ENCODE measurements at regions of chr3 and their contacts with region 1.

Region 1: DNA sequence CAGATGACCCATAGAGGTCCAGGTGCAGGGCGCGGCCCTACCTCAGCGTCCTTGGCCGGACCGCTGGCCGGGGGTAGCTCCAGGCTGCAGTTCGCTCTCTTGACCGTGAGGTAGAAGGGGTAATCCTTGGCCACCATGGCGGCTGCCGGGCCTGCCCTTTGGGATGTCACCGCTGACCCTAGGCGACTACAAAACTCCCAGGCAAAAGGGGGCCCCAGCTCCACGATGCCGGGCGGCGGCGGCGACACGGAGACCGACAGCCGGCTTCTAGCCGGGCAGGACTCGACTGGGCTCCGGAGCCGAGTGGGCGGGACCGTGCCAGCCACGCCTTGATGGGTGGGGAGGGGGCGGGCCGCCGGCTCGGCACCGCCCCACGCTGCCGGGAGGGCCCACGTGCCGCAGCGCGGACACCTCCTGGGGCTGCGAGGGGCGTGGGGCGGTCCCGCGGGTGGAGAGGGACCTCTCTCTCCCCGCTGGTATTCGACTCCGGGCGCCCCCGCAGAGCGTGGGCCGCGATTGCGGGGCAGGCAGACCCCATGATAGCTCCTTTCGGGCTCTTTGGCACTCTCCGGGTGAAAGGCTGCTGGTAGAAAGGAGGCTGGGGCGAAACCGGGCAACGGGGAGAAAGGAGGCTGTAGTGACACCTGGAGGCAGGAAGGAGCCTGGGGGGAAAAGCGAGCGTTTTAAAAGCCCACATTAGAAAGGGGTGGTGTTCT is at the start of gene ARHGEF3:
- DNase-seq: peak; percentile 98
- H3K4me3 ChIP-seq: peak within 1 kb of the TSS; percentile 66 to 98 (median 76)
- H3K27ac ChIP-seq: peak within 1 kb of the TSS; percentile 64 to 91 (median 82)
- H3K4me1 ChIP-seq: peaks cover 28 to 58% (median 50%) of the 10 kb centered on the region in 6 donors
- H3K27me3 ChIP-seq: no peaks in the 10 kb centered on the region
- CTCF ChIP-seq: peak in 10 of 11 experiments; percentile 9 to 76 (median 60)
- POLR2A ChIP-seq: peak; percentile 65 to 92 (median 77)
- total RNA-seq, gene ARHGEF3: 29.6 to 35.1 (median 33.4) TPM

Region 2: DNA sequence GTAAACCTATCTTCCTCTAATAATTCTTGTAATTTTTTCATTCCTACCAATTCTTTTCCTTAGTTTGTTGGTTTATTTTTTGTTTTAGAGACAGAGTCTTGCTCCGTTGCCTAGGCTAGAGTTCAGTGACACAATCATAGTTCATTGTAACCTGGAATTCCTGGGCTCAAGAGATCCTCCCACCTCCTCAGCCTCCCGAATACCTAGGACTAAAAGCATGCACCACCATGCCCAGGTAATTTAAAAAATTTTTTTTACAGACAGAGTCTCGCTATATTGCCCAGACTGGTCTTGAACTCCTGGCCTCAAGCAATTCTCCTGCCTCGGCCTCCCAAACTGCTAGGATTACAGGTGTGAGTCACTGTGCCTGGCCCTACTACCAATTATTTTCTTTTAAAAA is 553.8 kb before region 1 on chr3:
- intact Hi-C with region 1: no loop called
- DNase-seq: no peak
- H3K4me3 ChIP-seq: no peak overlapping the region
- H3K27ac ChIP-seq: no peak overlapping the region
- H3K4me1 ChIP-seq: no peaks in the 10 kb centered on the region
- H3K27me3 ChIP-seq: no peaks in the 10 kb centered on the region
- CTCF ChIP-seq: no peak
- POLR2A ChIP-seq: no peak

Region 3: DNA sequence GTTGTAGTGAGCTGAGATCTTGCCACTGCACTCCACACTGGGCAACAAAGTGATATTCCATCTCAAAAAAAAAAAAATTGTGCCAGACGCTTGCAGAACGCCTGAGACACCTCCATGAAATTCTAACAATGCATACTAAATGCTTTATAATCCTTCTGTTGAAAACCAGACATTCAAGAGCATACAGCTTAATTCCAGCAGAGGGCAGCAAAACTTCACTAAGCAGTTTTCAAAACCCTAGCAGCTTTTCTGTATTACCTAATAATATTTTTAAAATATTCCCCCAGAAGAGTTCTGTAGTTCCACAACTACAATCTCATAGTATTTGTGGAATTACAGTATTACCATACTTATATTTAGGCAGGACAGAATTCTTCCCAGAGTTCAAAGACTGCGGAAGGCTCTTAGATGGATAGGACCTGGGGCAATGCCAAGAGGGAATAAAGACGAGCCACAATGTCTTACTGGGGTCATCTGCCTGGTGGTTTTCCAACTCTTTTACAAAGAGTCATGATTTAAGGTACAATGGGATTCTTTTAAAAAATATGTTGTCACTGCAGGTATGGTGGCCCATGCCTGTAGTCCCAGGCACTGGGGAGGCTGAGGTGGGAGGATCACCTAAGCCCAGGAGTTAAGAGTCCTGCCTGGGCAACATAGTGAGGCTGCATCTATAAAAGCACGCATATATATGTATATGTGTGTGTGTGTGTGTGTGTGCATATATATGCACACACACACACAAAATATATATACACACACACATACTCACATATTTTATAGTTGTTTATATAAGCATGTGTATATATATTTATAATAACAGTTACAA is 99.1 kb before region 1 on chr3:
- intact Hi-C with region 1: loop called (anchors 5 kb)
- DNase-seq: no peak
- H3K4me3 ChIP-seq: no peak overlapping the region
- H3K27ac ChIP-seq: no peak overlapping the region
- H3K4me1 ChIP-seq: peaks cover 0 to 19% (median 10%) of the 10 kb centered on the region in 6 donors
- H3K27me3 ChIP-seq: no peaks in the 10 kb centered on the region
- CTCF ChIP-seq: peak; percentile 76 to 90 (median 84)
- POLR2A ChIP-seq: no peak

Region 4: DNA sequence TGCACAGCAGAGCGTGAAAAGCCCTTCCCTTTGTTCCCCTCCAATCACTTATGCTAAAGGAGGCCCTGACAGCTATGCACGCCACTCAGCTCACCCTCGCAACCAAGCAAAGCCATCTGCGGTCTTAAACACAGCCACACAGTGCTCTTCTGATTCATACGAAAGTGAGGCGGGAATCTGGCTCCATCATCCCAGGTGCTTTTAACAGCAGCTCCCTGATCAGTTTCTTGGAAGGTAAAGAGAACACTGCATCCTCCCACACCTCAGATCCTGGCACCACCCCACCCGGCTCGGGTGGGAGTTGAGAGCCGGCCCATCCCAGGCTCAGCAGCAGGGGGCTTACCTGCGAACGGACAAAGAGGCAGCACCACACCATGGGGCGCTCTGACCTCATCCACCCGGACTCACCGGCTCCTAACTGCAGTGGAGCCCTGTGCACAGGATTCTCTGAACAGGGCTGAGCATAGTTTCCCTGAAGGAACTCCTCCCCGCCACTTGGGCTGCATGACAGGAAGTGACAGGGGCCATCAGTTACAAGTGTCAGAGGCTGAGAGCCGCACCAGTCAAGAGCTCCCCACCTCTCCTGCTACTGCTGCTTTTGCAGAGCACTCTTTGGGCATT is 114.3 kb after region 1 on chr3:
- intact Hi-C with region 1: loop called (anchors 10 kb)
- DNase-seq: peak; percentile 88
- H3K4me3 ChIP-seq: peak overlapping the region; percentile 27 to 70 (median 44)
- H3K27ac ChIP-seq: peak overlapping the region in 7 of 8 donors; percentile 22 to 89 (median 79)
- H3K4me1 ChIP-seq: peaks cover 17 to 59% (median 42%) of the 10 kb centered on the region in 6 donors
- H3K27me3 ChIP-seq: no peaks in the 10 kb centered on the region
- CTCF ChIP-seq: peak in 3 of 11 experiments; percentile 12 to 16 (median 16)
- POLR2A ChIP-seq: no peak

Measured in spleen (tissue), 13 donors.